Activated CD4-positive, alpha-beta T cell treated with anti-CD3 and anti-CD28 coated beads for 36 hours (primary cell): ENCODE measurements at regions of chr15 and their contacts with region 1.

Region 1: DNA sequence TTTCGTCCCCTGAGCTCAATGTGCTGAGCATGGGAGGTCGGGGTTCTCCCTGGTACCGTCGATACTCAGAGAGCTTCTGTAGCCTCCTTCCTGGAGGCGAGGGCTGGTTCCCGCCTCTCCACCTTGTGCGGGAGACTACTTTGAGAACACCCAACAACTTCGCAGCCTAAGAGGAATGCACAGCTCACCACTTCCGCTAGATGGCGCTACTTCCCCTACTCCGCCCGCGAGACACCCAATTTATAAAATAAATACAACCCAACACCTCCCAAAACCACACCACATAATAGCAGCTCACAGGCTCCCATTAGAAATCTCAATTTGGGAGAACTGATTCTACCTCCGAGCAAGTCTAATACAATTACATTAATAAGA is 1.2 kb downstream of the RGMA start:
- DNase-seq: peak; percentile 83
- ATAC-seq: peak; percentile 78
- H3K4me3 Mint-ChIP-seq: peak overlapping the region; percentile 64
- H3K27ac Mint-ChIP-seq: no peak overlapping the region
- H3K4me1 Mint-ChIP-seq: peaks cover 13% of the 10 kb centered on the region
- H3K27me3 Mint-ChIP-seq: peaks cover 51% of the 10 kb centered on the region

Region 2: GRCh38 chr15:93076875-93077274 is 10.9 kb before region 1 on chr15:
- CTCF ChIA-PET with region 1: interaction called, 21 read pairs
- POLR2A ChIA-PET with region 1: no interaction called
- intact Hi-C with region 1: no loop called
- DNase-seq: no peak
- ATAC-seq: no peak
- H3K4me3 Mint-ChIP-seq: no peak overlapping the region
- H3K27ac Mint-ChIP-seq: no peak overlapping the region
- H3K4me1 Mint-ChIP-seq: peaks cover 9% of the 10 kb centered on the region
- H3K27me3 Mint-ChIP-seq: peaks cover 45% of the 10 kb centered on the region

Region 3: GRCh38 chr15:93235926-93236780 is 148.3 kb after region 1 on chr15:
- CTCF ChIA-PET with region 1: interaction called, 5 read pairs
- POLR2A ChIA-PET with region 1: no interaction called
- intact Hi-C with region 1: loop called in 1 of 2 experiments (anchors 5 kb)
- DNase-seq: peak; percentile 34
- ATAC-seq: peak; percentile 74
- H3K4me3 Mint-ChIP-seq: peak overlapping the region; percentile 56
- H3K27ac Mint-ChIP-seq: peak overlapping the region; percentile 87
- H3K4me1 Mint-ChIP-seq: peaks cover 19% of the 10 kb centered on the region
- H3K27me3 Mint-ChIP-seq: peaks cover 4% of the 10 kb centered on the region

Region 4: GRCh38 chr15:93331545-93332167 is 243.8 kb after region 1 on chr15:
- CTCF ChIA-PET with region 1: no interaction called
- POLR2A ChIA-PET with region 1: no interaction called
- intact Hi-C with region 1: loop called in 1 of 2 experiments (anchors 10 kb)
- DNase-seq: no peak
- ATAC-seq: no peak
- H3K4me3 Mint-ChIP-seq: no peak overlapping the region
- H3K27ac Mint-ChIP-seq: no peak overlapping the region
- H3K4me1 Mint-ChIP-seq: no peaks in the 10 kb centered on the region
- H3K27me3 Mint-ChIP-seq: peaks cover 16% of the 10 kb centered on the region

Region 5: GRCh38 chr15:93997084-93997918 is 909.5 kb after region 1 on chr15:
- CTCF ChIA-PET with region 1: no interaction called
- POLR2A ChIA-PET with region 1: no interaction called
- intact Hi-C with region 1: loop called in 1 of 2 experiments (anchors 10 kb)
- DNase-seq: no peak
- ATAC-seq: no peak
- H3K4me3 Mint-ChIP-seq: no peak overlapping the region
- H3K27ac Mint-ChIP-seq: no peak overlapping the region
- H3K4me1 Mint-ChIP-seq: no peaks in the 10 kb centered on the region
- H3K27me3 Mint-ChIP-seq: no peaks in the 10 kb centered on the region

Region 6: DNA sequence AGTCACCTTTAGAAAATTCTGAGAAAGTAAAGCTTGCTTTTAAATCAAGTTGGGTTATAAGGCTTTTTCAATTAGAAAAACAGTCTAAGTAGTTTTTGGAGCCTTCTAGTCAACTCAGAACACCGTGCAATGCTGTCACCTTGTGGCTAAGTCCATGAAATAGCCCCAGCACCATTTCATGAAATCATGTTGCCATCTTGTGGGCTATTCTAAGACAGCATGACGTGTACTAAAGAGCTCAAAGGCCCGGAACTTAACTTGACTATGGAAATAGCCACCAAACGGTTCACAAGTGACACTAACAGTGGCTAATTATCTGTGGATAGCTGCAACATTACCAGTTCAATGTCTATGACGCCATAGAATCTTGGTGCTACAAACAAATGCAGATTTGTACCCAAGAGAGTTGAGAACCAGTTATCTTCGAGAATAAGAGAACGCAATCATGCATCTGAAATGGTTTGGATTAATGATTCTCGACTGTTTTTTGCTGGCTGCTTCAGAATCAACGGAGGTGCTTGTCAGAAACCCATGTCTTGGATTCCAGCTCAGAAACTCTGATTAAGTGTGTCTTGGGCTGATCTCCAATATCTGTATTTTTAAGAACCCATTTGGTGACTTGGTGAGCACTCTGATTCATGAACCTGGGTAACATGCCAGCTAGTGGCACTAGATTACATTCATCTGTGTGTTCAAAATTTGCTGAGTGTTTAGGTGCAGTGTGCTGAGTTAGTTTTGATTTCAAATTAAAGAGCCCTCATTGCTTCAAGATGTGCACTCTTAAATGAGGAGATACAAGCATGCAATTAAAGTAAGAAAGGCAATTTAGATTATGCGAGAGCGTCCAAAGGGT is 1032.3 kb after region 1 on chr15:
- CTCF ChIA-PET with region 1: interaction called, 13 read pairs
- POLR2A ChIA-PET with region 1: no interaction called
- intact Hi-C with region 1: loop called in 1 of 2 experiments (anchors 1 kb)
- DNase-seq: peak; percentile 68
- ATAC-seq: peak; percentile 100
- H3K4me3 Mint-ChIP-seq: no peak overlapping the region
- H3K27ac Mint-ChIP-seq: no peak overlapping the region
- H3K4me1 Mint-ChIP-seq: no peaks in the 10 kb centered on the region
- H3K27me3 Mint-ChIP-seq: no peaks in the 10 kb centered on the region